ENCODE measurements at regions of chr12 and their contacts with region 1.

Region 1: GRCh38 chr12:19915392-19916195 is 452.7 kb upstream of the PDE3A start:
- DNase-seq: peak; percentile 85
- H3K4me3 ChIP-seq: no peak overlapping the region
- H3K27ac ChIP-seq: no peak overlapping the region
- H3K4me1 ChIP-seq: peaks cover 5% of the 10 kb centered on the region
- H3K27me3 ChIP-seq: no peaks in the 10 kb centered on the region
- CTCF ChIP-seq: peak; percentile 42 to 48
- POLR2A ChIP-seq: no peak

Region 2: DNA sequence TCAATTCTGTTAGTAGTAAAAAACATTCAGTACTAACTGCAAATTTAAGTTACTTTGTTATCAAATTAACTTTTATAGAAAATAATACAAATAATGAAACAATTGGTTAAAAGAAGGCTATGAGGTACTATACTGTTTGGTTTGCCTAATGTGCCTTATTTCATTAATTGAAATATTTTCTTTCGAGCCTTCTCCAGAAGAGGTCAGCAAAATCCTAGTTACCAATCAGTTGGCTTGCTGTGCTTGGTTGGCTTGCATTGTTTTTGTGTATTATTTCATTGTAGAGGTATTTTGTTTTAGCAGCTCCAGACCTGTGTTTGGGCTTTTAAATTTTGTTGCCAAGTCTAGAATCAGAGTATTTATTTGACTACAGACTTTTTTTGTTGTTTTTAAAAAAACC is 407.8 kb before region 1 on chr12:
- CTCF ChIA-PET with region 1: interaction called, 3 read pairs
- POLR2A ChIA-PET with region 1: no interaction called
- dilution Hi-C with region 1: no loop called
- intact Hi-C with region 1: loop called (anchors 5 kb)
- DNase-seq: peak; percentile 75
- H3K4me3 ChIP-seq: no peak overlapping the region
- H3K27ac ChIP-seq: no peak overlapping the region
- H3K4me1 ChIP-seq: peaks cover 7% of the 10 kb centered on the region
- H3K27me3 ChIP-seq: no peaks in the 10 kb centered on the region
- CTCF ChIP-seq: peak in 1 of 2 donors; percentile 23
- POLR2A ChIP-seq: no peak

Region 3: DNA sequence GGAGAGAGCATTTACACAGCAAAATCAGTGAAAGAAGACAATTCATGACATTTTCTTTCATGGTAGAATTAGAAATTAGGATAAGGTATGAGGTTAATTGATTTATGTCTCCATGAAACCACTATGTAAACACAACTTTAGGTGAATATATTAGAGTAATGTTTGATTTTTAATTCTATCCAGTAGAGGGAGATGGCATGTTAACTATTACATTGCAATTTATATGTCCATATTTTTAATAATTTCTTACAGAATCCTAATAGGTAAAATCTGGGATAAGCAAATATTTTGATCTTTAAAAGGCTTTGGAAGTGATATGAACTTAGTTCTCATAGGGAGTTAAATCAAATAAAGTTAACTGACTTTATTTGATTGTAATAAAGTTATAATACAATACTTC is 79.4 kb after region 1 on chr12:
- CTCF ChIA-PET with region 1: interaction called, 4 read pairs
- POLR2A ChIA-PET with region 1: no interaction called
- dilution Hi-C with region 1: no loop called
- intact Hi-C with region 1: loop called (anchors 5 kb)
- DNase-seq: peak; percentile 63
- H3K4me3 ChIP-seq: no peak overlapping the region
- H3K27ac ChIP-seq: no peak overlapping the region
- H3K4me1 ChIP-seq: peaks cover 20% of the 10 kb centered on the region
- H3K27me3 ChIP-seq: no peaks in the 10 kb centered on the region
- CTCF ChIP-seq: peak in 1 of 2 donors; percentile 10
- POLR2A ChIP-seq: no peak

Region 4: DNA sequence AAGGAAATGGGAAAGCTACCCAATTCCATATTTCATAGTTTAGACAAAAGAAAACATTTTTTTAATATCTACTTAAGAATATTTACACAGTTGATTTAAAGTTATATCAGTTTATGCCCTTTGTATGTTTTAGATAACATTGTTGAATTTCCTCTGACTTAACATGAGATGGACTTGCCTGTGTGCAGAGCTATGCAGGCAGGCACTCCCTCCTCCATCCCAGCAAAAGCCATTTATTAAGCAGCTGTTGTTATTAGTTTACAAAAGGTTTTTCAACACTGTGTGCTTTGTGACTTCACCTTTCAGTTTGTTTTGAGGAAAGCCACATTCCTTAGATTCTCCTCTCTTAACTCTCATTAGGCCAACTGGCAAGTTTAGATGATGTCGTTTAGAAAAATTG is 115.2 kb after region 1 on chr12:
- CTCF ChIA-PET with region 1: interaction called, 5 read pairs
- POLR2A ChIA-PET with region 1: no interaction called
- dilution Hi-C with region 1: no loop called
- intact Hi-C with region 1: loop called (anchors 2 kb)
- DNase-seq: peak; percentile 96
- H3K4me3 ChIP-seq: no peak overlapping the region
- H3K27ac ChIP-seq: peak overlapping the region; percentile 91
- H3K4me1 ChIP-seq: peaks cover 31% of the 10 kb centered on the region
- H3K27me3 ChIP-seq: no peaks in the 10 kb centered on the region
- CTCF ChIP-seq: no peak
- POLR2A ChIP-seq: peak; percentile 56

Region 5: DNA sequence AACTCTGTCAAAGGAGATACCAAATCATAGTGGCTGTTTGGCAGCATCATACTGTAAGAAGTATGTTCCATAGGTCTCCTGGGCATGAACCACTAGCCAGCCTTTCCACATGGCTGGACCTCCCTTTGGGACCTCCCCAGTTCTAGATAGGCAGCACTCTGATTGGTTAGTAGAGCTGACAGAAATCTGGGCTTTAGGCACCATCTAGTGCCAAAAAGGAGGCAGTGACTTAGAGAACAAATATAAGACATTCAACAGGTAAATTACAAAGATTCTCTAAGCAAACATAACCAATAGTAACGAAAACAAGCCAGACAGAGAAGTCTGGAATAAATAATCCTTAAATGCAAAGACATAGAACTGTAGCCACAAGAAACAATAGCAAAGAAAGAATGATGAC is 304.7 kb after region 1 on chr12:
- CTCF ChIA-PET with region 1: interaction called, 79 read pairs
- POLR2A ChIA-PET with region 1: no interaction called
- dilution Hi-C with region 1: no loop called
- intact Hi-C with region 1: loop called (anchors 1 kb)
- DNase-seq: peak; percentile 61
- H3K4me3 ChIP-seq: no peak overlapping the region
- H3K27ac ChIP-seq: no peak overlapping the region
- H3K4me1 ChIP-seq: no peaks in the 10 kb centered on the region
- H3K27me3 ChIP-seq: no peaks in the 10 kb centered on the region
- CTCF ChIP-seq: peak; percentile 26 to 30
- POLR2A ChIP-seq: no peak

Region 6: DNA sequence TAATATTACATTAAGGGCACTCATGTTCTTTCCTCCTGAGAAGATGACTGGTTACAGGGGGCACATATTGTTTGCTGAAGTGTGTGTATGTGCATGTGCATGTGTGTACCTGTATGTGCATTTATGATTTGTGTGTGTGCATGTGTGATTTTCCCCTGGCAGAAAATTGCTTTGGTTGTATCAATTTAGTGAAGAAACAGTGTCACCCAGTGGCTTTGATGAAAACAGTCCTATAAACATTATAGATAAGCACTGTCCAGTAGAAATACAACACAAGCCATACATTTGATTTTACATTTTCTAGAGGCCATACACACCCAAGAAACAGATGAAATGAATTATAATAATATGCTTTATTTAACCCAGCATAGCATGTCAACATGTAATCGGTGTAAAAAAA is 461.4 kb after region 1 on chr12:
- CTCF ChIA-PET with region 1: interaction called, 18 read pairs
- POLR2A ChIA-PET with region 1: no interaction called
- dilution Hi-C with region 1: no loop called
- intact Hi-C with region 1: loop called (anchors 1 kb)
- DNase-seq: peak; percentile 60
- H3K4me3 ChIP-seq: no peak overlapping the region
- H3K27ac ChIP-seq: no peak overlapping the region
- H3K4me1 ChIP-seq: peaks cover 37% of the 10 kb centered on the region
- H3K27me3 ChIP-seq: no peaks in the 10 kb centered on the region
- CTCF ChIP-seq: peak; percentile 22 to 35
- POLR2A ChIP-seq: no peak

Region 7: DNA sequence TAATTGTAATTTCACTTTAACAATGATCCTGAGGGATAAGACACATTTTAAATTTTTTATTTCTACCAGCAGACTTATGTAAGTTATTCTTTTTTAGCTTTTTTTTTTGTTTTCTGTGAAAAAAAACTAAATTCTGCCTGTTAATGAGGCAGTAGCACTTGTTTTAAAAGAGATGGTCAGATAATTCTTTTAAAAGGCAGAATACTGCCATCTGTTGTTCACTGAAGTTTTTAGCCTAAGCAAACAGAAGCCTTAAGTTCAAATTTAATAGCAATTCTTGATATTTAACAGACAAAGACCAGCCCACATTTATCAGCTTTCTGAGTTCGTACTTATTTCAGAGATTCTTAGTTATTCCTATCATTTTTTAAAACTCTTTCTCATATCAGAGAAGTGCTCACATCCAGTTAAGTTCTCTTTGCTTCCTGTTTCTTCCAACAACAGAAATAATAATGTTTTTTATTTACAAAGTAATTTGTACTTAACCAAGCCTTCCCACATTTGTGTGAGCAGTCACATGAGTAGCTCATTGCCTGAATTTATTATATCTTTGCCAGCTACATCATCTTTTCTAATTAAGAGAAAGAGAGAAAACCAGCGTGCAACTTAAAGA is 686.2 kb after region 1 on chr12:
- CTCF ChIA-PET with region 1: interaction called, 27 read pairs
- POLR2A ChIA-PET with region 1: no interaction called
- dilution Hi-C with region 1: no loop called
- intact Hi-C with region 1: loop called (anchors 2 kb)
- DNase-seq: peak; percentile 75
- H3K4me3 ChIP-seq: no peak overlapping the region
- H3K27ac ChIP-seq: no peak overlapping the region
- H3K4me1 ChIP-seq: peaks cover 9% of the 10 kb centered on the region
- H3K27me3 ChIP-seq: no peaks in the 10 kb centered on the region
- CTCF ChIP-seq: peak in 1 of 2 donors; percentile 24
- POLR2A ChIP-seq: no peak

Measured in endothelial cell of umbilical vein (primary cell).